Transverse colon (tissue), 4 donors: ENCODE measurements at regions of chr14 and their contacts with region 1.

Region 1: GRCh38 chr14:77641534-77642341 is 25.3 kb upstream of the SPTLC2 start:
- DNase-seq: peak; percentile 76
- H3K4me3 ChIP-seq: peak overlapping the region; percentile 1 to 49 (median 28)
- H3K27ac ChIP-seq: peak overlapping the region; percentile 60 to 80 (median 73)
- H3K4me1 ChIP-seq: peaks cover 5 to 15% (median 13%) of the 10 kb centered on the region in 4 donors
- H3K27me3 ChIP-seq: no peaks in the 10 kb centered on the region
- CTCF ChIP-seq: no peak
- EP300 ChIP-seq: no peak
- POLR2A ChIP-seq: peak; percentile 39

Region 2: DNA sequence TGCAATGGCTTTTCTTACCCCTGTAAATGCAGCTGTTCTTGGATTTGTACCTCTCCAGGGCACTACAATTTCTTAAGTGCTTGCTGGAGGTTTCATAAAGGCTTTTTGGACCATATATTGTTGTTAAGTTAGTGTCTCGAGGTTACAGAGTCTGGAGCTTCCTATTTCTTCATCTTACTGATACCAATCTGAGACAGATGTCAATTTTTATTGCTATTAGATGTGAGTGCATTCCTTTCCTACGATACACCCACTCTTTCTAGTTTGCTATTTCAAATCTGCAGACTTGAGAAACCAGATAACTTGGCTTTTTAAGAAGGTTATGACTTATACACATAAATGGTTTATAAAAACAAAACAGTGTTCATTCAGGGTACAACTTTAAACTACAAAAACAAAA is 220.5 kb before region 1 on chr14:
- in situ Hi-C with region 1: no loop called
- intact Hi-C with region 1: no loop called
- DNase-seq: no peak
- H3K4me3 ChIP-seq: no peak overlapping the region
- H3K27ac ChIP-seq: no peak overlapping the region
- H3K4me1 ChIP-seq: no peaks in the 10 kb centered on the region
- H3K27me3 ChIP-seq: no peaks in the 10 kb centered on the region
- CTCF ChIP-seq: no peak
- EP300 ChIP-seq: no peak
- POLR2A ChIP-seq: no peak

Region 3: GRCh38 chr14:77603654-77604255 is 38.0 kb before region 1 on chr14:
- in situ Hi-C with region 1: no loop called
- intact Hi-C with region 1: loop called (anchors 1 kb)
- DNase-seq: peak; percentile 51
- H3K4me3 ChIP-seq: no peak overlapping the region
- H3K27ac ChIP-seq: no peak overlapping the region
- H3K4me1 ChIP-seq: peaks cover 10 to 75% (median 45%) of the 10 kb centered on the region in 4 donors
- H3K27me3 ChIP-seq: no peaks in the 10 kb centered on the region
- CTCF ChIP-seq: peak; percentile 8 to 47 (median 26)
- EP300 ChIP-seq: no peak
- POLR2A ChIP-seq: no peak